Panc1 (cell line): ENCODE measurements at regions of chr5 and their contacts with region 1.

Region 1: DNA sequence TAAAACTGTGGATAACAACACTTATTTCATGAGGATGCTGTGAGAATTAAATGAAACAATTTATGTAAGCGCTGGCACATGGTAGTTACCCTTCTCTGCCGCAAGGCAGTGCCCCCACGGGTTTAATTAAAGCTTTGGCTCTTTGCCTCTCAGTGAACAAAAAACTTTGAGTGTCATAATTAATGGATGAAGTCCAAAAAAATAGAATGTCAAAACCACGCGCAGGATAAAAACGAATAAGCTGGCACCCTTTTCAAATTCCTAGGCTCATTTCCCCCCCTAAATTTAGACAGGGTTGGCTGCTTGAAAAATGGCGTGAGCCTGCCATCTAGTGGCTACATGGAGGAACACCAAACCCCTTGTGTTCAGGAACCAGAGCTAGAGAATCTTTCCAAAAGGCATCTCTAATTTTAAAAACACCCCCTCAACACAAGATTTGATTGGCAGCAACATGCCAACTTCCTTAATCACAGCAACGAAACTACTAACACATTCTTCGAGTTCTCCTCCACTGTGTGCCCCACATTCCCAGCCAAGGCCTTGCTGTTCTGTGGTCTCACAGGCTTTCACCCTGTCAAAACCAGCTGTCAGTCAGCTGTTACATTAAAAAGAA is 29.0 kb upstream of the CCNG1 start:
- DNase-seq: peak; percentile 28
- ATAC-seq: peak; percentile 96
- H3K4me3 ChIP-seq: no peak overlapping the region
- H3K27ac ChIP-seq: no peak overlapping the region
- H3K4me1 ChIP-seq: peaks cover 6% of the 10 kb centered on the region; the same call in 1 of the 2 replicates
- H3K27me3 ChIP-seq: no peaks in the 10 kb centered on the region
- CTCF ChIP-seq: peak; percentile 90

Region 2: DNA sequence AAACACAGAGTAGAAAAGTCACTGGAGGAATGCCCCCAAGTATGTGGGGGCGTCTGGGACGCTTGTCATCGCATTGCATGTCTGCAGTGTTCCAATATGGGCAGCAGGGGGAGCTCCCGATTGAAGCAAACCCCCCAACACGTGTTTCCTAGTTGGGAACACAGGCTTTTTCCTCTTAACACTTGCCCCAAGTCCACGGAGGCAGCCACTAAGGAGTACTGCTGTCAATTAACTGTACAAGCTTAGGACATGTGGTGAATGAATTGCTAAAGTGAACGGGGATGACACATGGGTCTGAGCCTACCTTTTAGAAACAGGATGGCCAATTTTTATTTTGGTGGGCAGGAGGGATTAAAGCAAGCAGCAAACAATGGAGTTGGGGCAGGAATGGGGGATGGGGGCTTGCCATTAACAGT is 1864.1 kb before region 1 on chr5:
- CTCF ChIA-PET with region 1: no interaction called
- POLR2A ChIA-PET with region 1: no interaction called
- in situ Hi-C with region 1: no loop called
- intact Hi-C with region 1: loop called (anchors 5 kb)
- DNase-seq: no peak
- ATAC-seq: 0 out of 2 replicates have a peak, but pooled peaks have one; percentile 45
- H3K4me3 ChIP-seq: no peak overlapping the region
- H3K27ac ChIP-seq: no peak overlapping the region
- H3K4me1 ChIP-seq: peaks cover 3% of the 10 kb centered on the region; the same call in 1 of the 2 replicates
- H3K27me3 ChIP-seq: peaks cover 19% of the 10 kb centered on the region
- CTCF ChIP-seq: peak; percentile 91

Region 3: DNA sequence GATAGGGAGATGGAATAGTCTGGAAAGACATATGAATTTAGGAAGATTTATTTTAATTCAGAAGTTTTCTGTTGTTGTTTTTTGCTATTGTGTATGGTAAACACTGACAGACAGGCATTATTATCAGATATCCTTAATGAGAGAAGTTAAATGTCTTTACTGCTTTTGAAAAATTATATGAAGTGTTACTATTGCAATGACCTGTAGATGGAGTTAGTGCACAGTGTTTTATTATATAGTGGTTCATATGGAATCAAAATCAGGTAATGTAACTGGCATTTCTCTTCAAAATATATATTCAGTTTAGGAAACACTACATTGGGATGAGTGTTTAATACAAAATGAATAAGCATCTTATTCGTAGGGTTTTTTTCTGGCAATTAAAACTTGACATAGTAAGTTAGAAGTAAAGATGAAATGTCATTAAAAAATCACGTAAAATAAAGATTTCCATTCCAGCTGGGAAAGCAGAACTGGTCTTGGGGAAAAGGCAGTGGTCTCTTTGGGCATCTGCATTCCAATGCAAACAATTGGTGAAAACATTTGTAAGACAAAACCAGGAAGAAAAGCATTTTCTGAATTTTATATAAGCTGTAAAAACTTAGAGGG is 1556.6 kb before region 1 on chr5:
- CTCF ChIA-PET with region 1: no interaction called
- POLR2A ChIA-PET with region 1: no interaction called
- in situ Hi-C with region 1: no loop called
- intact Hi-C with region 1: loop called (anchors 10 kb)
- DNase-seq: no peak
- ATAC-seq: no peak
- H3K4me3 ChIP-seq: no peak overlapping the region
- H3K27ac ChIP-seq: no peak overlapping the region
- H3K4me1 ChIP-seq: no peaks in the 10 kb centered on the region
- H3K27me3 ChIP-seq: peaks cover 9% of the 10 kb centered on the region; the same call in 1 of the 2 replicates
- CTCF ChIP-seq: peak; percentile 43; the same call in 1 of the 2 replicates

Region 4: DNA sequence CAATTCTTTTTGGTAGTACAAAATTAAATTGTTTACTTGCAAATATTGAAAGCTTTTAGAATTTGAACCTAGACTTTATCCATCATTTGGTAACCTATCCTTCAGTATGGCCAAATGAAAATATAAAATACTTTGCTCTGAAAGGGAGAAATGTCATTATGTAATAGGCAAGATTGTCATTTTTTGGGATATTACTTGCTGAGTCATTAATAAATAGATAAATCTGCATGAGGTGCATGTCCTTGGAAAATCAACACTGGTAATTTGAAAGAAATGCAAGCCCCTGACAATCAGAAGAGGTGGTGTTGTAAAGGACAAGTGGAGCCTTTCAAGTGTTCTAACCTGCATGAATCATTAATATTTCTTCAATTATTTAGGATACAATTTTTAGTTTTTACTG is 202.8 kb before region 1 on chr5:
- CTCF ChIA-PET with region 1: no interaction called
- POLR2A ChIA-PET with region 1: no interaction called
- in situ Hi-C with region 1: no loop called
- intact Hi-C with region 1: no loop called
- DNase-seq: no peak
- ATAC-seq: no peak
- H3K4me3 ChIP-seq: no peak overlapping the region
- H3K27ac ChIP-seq: no peak overlapping the region
- H3K4me1 ChIP-seq: no peaks in the 10 kb centered on the region
- H3K27me3 ChIP-seq: no peaks in the 10 kb centered on the region
- CTCF ChIP-seq: no peak